T-cell (primary cell): ENCODE measurements at regions of chr6 and their contacts with region 1.

Region 1: DNA sequence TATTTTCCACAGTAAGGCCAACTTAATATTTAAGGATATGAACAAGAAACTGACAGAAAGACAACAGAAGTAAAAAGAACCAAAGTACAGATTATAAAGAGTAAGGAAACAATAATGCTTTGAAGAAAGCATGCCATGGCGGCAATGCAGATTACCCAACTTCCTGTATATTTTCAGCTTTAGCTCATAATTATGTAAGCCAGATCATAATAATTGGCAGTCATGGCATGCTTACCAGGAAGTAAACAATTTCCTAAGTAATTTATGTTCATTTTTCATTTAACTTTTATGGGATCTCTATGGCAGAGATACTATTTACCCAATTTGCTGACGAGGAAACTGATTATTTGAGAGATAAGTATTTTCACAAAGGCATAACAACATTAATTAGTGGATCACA is 988.7 kb downstream of the HACE1 start:
- DNase-seq: no peak
- ATAC-seq: no peak
- H3K4me3 ChIP-seq: no peak overlapping the region
- H3K4me3 Mint-ChIP-seq: no peak overlapping the region
- H3K27ac ChIP-seq: no peak overlapping the region
- H3K27ac Mint-ChIP-seq: no peak overlapping the region
- H3K4me1 ChIP-seq: no peaks in the 10 kb centered on the region
- H3K4me1 Mint-ChIP-seq: no peaks in the 10 kb centered on the region
- H3K27me3 ChIP-seq: no peaks in the 10 kb centered on the region
- H3K27me3 Mint-ChIP-seq: no peaks in the 10 kb centered on the region

Region 2: DNA sequence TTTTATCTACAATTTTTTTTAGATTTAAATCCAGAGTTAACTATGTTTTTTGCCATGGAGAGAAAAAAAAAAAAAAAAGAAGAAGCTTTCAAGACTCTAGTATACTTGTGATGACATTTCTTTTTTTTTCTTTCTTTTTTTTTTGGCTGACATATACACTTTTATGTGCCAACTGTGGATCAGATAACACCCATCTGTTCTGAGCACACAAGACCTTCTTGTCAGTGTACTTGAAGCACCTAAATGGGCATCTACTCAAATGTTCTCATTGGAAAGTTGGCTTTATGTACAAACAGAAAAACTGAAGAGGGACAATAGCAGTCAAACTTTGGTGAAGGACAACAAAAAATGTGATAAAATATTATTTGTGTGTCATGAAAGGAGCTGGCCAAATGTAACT is 1572.9 kb before region 1 on chr6:
- CTCF ChIA-PET with region 1: no interaction called
- POLR2A ChIA-PET with region 1: interaction called in 1 of 2 experiments, 15 read pairs
- DNase-seq: no peak
- ATAC-seq: no peak
- H3K4me3 ChIP-seq: no peak overlapping the region
- H3K4me3 Mint-ChIP-seq: no peak overlapping the region
- H3K27ac ChIP-seq: no peak overlapping the region
- H3K27ac Mint-ChIP-seq: no peak overlapping the region
- H3K4me1 ChIP-seq: no peaks in the 10 kb centered on the region
- H3K4me1 Mint-ChIP-seq: no peaks in the 10 kb centered on the region
- H3K27me3 ChIP-seq: no peaks in the 10 kb centered on the region
- H3K27me3 Mint-ChIP-seq: no peaks in the 10 kb centered on the region

Region 3: GRCh38 chr6:103750603-103751002 is 120.4 kb before region 1 on chr6:
- CTCF ChIA-PET with region 1: no interaction called
- POLR2A ChIA-PET with region 1: no interaction called
- DNase-seq: no peak
- ATAC-seq: no peak
- H3K4me3 ChIP-seq: no peak overlapping the region
- H3K4me3 Mint-ChIP-seq: no peak overlapping the region
- H3K27ac ChIP-seq: no peak overlapping the region
- H3K27ac Mint-ChIP-seq: no peak overlapping the region
- H3K4me1 ChIP-seq: no peaks in the 10 kb centered on the region
- H3K4me1 Mint-ChIP-seq: no peaks in the 10 kb centered on the region
- H3K27me3 ChIP-seq: no peaks in the 10 kb centered on the region
- H3K27me3 Mint-ChIP-seq: no peaks in the 10 kb centered on the region